Activated CD4-positive, alpha-beta T cell treated with anti-CD3 and anti-CD28 coated beads for 36 hours (primary cell): ENCODE measurements at regions of chr7 and their contacts with region 1.

Region 1: DNA sequence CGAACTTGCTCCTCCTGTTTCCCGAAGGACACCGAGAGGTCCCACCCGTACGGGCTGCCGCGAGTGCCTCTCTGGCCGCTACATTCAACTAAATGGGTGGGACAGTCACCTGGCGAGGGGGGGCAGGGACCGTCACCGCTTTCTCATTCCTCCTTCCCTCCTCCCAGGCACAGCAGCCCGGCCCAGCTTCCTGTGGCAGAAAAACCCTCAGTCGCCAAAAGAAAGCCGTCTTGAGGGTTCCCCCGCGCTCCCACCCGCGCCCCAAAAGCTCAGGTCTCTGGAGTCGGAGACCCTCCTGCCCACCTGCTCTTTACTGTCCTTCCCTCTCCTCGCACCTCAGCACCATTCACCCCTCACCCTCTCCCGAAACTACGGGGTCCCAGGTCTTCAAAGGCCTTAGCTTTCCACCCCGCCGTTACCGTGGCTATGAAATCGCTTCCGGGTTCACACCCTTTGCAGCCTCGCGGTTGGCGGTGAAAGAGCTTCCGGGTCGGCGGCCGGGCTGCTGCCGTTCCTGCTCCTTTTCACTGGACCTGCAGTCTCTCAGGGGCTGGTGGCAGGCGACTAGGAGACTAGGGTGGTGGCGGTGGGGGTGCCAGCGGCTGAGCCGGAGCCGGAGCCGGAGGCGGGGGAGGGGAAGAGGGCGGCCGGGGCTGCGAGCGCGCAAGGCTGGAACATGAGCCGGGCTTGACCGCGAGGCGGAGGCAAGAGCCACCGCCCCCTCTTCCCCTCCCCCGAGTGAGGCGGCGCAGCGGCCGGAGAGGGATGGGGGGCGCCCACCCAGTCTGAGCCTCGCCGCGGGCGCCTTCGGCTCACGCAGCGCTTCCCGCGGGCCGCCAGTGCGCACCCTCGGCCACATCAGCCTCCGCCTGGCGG is at the starts of genes ANKIB1 and KRIT1:
- DNase-seq: peak; percentile 93
- ATAC-seq: peak; percentile 81
- H3K4me3 Mint-ChIP-seq: peak within 1 kb of the TSS; percentile 97
- H3K27ac Mint-ChIP-seq: peak within 1 kb of the TSS; percentile 98
- H3K4me1 Mint-ChIP-seq: peaks cover 26% of the 10 kb centered on the region
- H3K27me3 Mint-ChIP-seq: no peaks in the 10 kb centered on the region
- total RNA-seq, gene ANKIB1: 37.0 to 55.1 TPM
- total RNA-seq, gene KRIT1: 37.7 to 45.5 TPM

Region 2: DNA sequence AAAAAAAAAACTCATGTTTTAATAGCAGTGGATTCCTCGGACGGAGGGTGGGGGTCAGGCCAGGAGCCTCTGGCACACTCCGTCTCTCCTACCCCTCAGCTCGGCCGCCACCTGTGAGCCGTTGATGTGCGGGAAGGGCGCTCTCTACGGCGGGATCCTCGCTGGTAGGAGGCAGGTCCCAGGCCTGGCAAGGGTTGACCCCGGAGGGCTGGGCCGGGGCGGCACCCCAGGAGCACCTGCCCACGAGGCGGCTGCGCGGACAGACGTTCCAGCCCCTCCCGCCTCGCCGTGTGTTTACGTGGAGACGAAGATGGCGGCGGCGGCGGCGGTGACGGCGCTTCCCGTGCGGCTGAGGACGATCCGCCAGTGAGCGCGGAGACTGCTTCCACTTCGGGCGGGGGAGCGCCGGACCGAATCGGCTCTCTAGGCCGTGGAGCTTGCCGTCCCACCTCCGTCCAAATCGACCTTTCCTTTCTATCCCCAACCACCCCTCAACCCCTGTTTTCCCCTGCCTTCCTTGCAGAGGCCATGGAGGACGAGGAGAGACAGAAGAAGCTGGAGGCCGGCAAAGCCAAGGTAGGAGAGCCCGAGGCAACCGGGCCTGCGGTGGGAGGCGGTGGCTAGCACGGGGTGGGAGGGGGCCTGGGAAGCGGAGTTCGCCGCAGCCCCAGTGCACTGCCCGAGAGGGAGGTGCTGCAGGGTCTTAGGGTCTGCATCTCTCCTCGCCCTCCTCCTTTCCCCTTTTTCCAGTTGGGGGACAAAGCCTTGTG is 305.0 kb before region 1 on chr7 and contains the start of gene AKAP9:
- CTCF ChIA-PET with region 1: no interaction called
- POLR2A ChIA-PET with region 1: interaction called, 3 read pairs
- intact Hi-C with region 1: loop called in 1 of 2 experiments (anchors 1 kb)
- DNase-seq: peak; percentile 94
- ATAC-seq: peak; percentile 91
- H3K4me3 Mint-ChIP-seq: peak within 1 kb of the TSS; percentile 87
- H3K27ac Mint-ChIP-seq: peak within 1 kb of the TSS; percentile 94
- H3K4me1 Mint-ChIP-seq: peaks cover 29% of the 10 kb centered on the region
- H3K27me3 Mint-ChIP-seq: no peaks in the 10 kb centered on the region
- total RNA-seq, gene AKAP9: 25.3 to 25.4 TPM

Region 3: DNA sequence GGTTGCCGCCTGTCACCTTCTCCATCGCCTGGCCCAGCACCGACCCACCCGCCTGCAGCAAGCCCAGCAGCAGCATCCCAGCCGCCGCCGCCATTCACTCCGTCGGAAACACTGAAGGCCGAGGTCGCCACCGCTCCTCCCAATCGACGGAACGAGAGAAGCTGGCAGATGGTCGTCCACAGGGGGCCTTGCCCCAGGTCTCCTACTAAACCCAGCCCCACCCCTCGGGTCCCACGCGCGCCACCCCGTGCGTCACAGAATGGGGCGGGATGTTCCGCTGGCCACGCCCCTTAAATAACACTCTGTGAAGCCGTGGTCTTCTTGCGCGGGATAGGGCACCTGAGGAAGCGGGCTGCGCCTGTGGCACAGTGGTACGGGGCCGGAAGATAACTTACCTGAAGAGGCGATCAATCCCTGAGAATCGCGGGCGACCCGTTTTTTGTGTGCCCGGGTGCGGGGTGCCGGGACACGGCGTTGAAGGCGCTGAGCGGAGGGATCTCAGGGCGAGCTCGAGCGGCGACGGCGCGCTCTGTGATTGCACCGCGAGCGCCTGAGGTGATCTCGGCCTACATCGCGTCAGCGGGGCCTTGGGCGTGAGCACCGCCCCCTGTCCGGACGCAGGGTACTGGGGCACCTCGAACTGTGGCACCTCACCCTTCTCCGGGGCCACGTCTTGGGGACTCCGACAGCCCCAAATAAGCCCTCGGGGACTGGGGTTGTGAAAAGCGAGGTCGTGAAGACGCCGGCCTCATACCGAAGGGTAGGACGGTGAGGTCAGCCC is 111.3 kb before region 1 on chr7 and contains the start of gene CYP51A1:
- CTCF ChIA-PET with region 1: no interaction called
- POLR2A ChIA-PET with region 1: interaction called, 7 read pairs
- intact Hi-C with region 1: loop called (anchors 1 to 2 kb)
- DNase-seq: peak; percentile 94
- ATAC-seq: peak; percentile 92
- H3K4me3 Mint-ChIP-seq: peak within 1 kb of the TSS; percentile 98
- H3K27ac Mint-ChIP-seq: peak within 1 kb of the TSS; percentile 99
- H3K4me1 Mint-ChIP-seq: peaks cover 20% of the 10 kb centered on the region
- H3K27me3 Mint-ChIP-seq: no peaks in the 10 kb centered on the region
- total RNA-seq, gene CYP51A1: 57.8 to 63.3 TPM

Region 4: GRCh38 chr7:92178927-92179924 is 66.5 kb before region 1 on chr7 and contains the start of gene LRRD1:
- CTCF ChIA-PET with region 1: no interaction called
- POLR2A ChIA-PET with region 1: no interaction called
- intact Hi-C with region 1: loop called in 1 of 2 experiments (anchors 2 kb)
- DNase-seq: peak; percentile 95
- ATAC-seq: peak; percentile 100
- H3K4me3 Mint-ChIP-seq: peak within 1 kb of the TSS; percentile 72
- H3K27ac Mint-ChIP-seq: peak within 1 kb of the TSS; percentile 47
- H3K4me1 Mint-ChIP-seq: peaks cover 7% of the 10 kb centered on the region
- H3K27me3 Mint-ChIP-seq: peaks cover 5% of the 10 kb centered on the region
- total RNA-seq, gene LRRD1: not detected

Region 5: GRCh38 chr7:92584996-92585395 is 339.3 kb after region 1 on chr7:
- CTCF ChIA-PET with region 1: no interaction called
- POLR2A ChIA-PET with region 1: no interaction called
- intact Hi-C with region 1: loop called in 1 of 2 experiments (anchors 2 kb)
- DNase-seq: peak; percentile 20
- ATAC-seq: peak; percentile 20
- H3K4me3 Mint-ChIP-seq: no peak overlapping the region
- H3K27ac Mint-ChIP-seq: peak overlapping the region; percentile 83
- H3K4me1 Mint-ChIP-seq: peaks cover 65% of the 10 kb centered on the region
- H3K27me3 Mint-ChIP-seq: no peaks in the 10 kb centered on the region